Heart left ventricle (tissue), 16 donors: ENCODE measurements at regions of chr1 and their contacts with region 1.

Region 1: GRCh38 chr1:153742411-153743142 is 14.7 kb downstream of the INTS3 start:
- DNase-seq: no peak
- ATAC-seq: peak in 2 of 4 donors; percentile 31 to 64
- H3K4me3 ChIP-seq: no peak overlapping the region
- H3K27ac ChIP-seq: peak overlapping the region in 1 of 12 donors; percentile 27
- H3K4me1 ChIP-seq: peaks cover 0 to 17% (median 2%) of the 10 kb centered on the region in 12 donors
- H3K27me3 ChIP-seq: no peaks in the 10 kb centered on the region
- CTCF ChIP-seq: no peak
- POLR2A ChIP-seq: no peak

Region 2: DNA sequence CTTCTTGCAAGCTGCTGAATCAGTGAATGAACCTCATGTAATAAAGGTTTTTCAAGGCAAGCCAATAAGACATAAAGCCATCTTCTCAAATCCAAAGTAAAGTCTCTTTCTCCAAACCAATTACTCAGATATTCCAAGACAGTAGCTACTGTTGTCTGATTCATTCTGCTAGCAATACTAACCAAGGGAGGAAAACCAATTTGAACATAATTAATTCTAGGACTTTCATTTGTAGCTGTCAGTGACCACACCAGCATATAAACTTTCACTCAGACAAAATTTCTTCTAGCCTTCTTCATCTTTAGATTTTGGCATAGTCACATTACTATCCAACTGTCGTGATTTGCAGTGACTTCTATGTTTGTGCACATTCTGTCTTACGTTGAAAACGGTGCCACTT is 25.2 kb before region 1 on chr1:
- intact Hi-C with region 1: loop called in 1 of 10 experiments (anchors 2 kb)
- DNase-seq: no peak
- ATAC-seq: no peak
- H3K4me3 ChIP-seq: no peak overlapping the region
- H3K27ac ChIP-seq: no peak overlapping the region
- H3K4me1 ChIP-seq: no peaks in the 10 kb centered on the region
- H3K27me3 ChIP-seq: peaks cover 0 to 3% (median 0%) of the 10 kb centered on the region in 9 donors
- CTCF ChIP-seq: no peak
- POLR2A ChIP-seq: no peak